Mammary epithelial cell (primary cell): ENCODE measurements at regions of chr22 and their contacts with region 1.

Region 1: DNA sequence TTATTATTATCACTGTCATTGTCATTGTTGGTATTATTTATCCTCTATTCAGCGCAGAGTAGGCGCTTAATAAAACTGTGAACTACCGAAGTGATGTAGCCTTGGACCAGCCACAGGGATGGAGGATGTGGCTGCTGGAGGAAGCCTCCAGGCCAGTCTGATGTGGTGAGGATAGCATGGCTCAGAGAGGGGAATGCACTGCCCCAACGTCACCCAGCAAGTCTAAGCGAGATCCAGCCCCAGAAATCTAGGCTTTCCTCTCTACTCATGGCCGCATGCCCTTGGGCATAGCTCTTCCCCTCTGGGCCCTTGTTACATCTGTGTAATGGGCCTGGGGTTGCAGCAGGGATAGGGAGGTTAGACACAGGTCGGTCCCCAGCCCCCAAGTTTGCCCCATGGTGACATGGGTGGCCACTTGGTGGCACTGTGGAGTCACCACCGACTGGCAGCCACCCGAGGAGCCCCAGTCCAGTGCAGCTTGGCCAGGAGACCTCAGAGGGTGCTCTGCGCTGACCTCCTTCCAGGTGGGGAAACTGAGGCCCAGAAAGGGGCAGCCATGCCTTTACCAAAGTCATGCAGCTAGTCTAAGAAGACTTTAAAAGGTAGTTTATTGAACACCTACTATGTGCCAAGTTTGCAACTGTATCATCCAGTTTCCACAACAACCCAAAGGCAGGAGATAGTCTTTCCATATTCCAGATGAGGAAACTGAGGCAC is 395.7 kb downstream of the MN1 start:
- DNase-seq: peak; percentile 45
- H3K4me3 ChIP-seq: no peak overlapping the region
- H3K27ac ChIP-seq: no peak overlapping the region
- H3K4me1 ChIP-seq: peaks cover 8% of the 10 kb centered on the region
- H3K27me3 ChIP-seq: no peaks in the 10 kb centered on the region
- CTCF ChIP-seq: peak; percentile 61 to 87

Region 2: DNA sequence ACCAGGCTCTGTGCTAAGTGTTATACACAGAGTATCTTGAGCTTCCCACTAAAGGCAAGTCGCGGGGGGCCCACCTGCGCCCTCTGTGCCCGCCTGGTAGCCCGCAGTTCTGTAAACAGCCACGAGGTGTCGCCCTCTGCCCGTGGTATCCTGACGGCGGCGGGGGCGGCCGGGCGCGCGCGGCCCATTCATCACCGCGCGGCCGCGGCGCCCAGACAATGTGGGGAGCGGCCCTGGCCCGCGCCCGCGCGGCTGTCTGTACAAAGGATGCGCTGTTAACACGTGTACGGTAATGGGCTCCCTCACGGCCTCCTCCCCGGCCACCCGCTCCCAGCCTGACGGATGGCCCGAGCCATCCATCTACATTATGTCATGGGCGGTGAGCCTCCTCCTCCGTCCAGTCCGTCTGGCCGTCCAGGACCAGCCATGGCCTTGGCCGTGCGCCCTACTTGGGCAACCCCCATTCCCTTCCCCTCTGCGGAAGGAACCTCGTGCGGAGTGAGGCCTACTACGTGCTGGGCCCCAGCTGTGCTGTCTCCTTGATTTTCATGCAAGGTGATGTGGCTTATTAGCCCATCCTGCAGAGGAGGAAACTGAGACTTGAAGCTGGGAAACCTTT is 649.0 kb before region 1 on chr22:
- CTCF ChIA-PET with region 1: no interaction called
- dilution Hi-C with region 1: no loop called
- in situ Hi-C with region 1: no loop called
- intact Hi-C with region 1: loop called (anchors 5 kb)
- DNase-seq: peak; percentile 36
- H3K4me3 ChIP-seq: peak overlapping the region in 1 of 3 experiments; percentile 36
- H3K27ac ChIP-seq: no peak overlapping the region
- H3K4me1 ChIP-seq: peaks cover 3% of the 10 kb centered on the region
- H3K27me3 ChIP-seq: no peaks in the 10 kb centered on the region
- CTCF ChIP-seq: peak; percentile 48 to 72

Region 3: DNA sequence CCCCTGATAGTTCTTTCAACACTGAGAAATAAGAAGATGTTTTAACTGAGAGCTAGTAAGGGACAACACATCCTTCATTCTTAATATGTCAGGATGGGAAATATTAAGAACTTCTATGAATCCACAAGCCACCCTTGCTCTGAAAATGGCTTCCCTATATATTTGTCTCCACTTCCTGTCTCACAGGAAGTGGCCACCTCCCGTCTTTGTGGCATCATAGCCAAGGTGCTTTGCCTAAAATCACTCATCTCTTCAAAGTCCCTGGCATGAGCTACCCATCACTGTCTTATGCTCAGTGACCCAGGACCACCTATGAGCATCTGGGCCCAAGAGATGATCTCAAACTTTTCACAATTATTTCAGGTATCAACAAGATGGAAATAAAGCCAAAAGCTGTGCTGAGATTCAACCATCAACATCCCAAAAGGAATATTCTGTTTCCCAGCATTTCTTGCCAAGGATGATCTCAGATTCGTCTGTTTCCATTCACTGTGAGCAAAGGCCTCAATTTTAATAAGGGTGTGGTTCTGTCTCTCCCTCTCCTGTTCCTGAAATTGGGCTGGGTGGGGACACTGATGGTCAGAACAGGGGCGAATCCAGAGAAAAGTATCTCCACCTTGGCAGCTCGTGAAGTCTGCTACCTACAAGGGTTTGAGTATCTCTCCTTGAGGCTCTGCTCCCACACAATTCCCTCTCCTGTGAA is 98.1 kb before region 1 on chr22:
- CTCF ChIA-PET with region 1: no interaction called
- dilution Hi-C with region 1: loop called (anchors 5 kb)
- in situ Hi-C with region 1: no loop called
- intact Hi-C with region 1: no loop called
- DNase-seq: no peak
- H3K4me3 ChIP-seq: no peak overlapping the region
- H3K27ac ChIP-seq: no peak overlapping the region
- H3K4me1 ChIP-seq: no peaks in the 10 kb centered on the region
- H3K27me3 ChIP-seq: no peaks in the 10 kb centered on the region
- CTCF ChIP-seq: no peak

Region 4: DNA sequence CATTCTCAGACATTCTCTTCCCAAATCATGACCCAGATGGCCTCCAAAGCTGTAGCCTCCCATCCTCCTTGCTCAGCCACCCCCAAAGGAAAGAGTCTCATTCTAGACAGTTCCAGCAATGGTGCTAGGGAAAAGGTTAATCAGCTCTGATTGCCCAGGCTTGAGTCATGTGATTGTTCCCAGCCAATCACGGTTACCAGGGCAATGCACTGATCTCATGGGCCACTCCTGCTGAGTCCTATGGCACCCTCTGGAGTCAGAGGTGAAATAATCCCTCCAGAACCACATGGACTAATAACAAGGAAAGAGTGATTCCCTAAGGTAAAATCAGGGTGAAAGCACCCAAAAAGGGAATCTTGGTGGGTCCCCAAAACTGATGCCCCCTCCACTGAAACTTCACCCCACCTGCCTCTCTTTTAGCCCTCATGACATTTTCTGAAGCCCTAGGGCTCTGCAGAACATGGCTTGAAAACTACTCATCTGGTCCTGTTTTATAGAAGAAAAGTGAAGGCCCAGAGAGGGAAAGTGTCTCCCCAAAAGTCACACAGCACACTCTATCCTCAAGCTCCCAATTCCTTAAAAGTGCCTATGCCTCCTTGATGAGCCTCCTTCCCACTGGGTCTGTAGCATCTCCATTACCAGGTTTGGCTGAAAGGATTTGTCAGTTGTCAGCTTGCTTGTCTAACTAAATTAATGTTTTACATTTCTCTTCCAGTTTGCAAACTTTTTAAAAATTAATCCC is 192.0 kb after region 1 on chr22:
- CTCF ChIA-PET with region 1: interaction called, 10 read pairs
- dilution Hi-C with region 1: no loop called
- in situ Hi-C with region 1: no loop called
- intact Hi-C with region 1: no loop called
- DNase-seq: peak; percentile 28
- H3K4me3 ChIP-seq: no peak overlapping the region
- H3K27ac ChIP-seq: no peak overlapping the region
- H3K4me1 ChIP-seq: no peaks in the 10 kb centered on the region
- H3K27me3 ChIP-seq: no peaks in the 10 kb centered on the region
- CTCF ChIP-seq: peak; percentile 3 to 28

Region 5: GRCh38 chr22:27718186-27719032 is 312.6 kb after region 1 on chr22:
- CTCF ChIA-PET with region 1: no interaction called
- dilution Hi-C with region 1: no loop called
- in situ Hi-C with region 1: no loop called
- intact Hi-C with region 1: loop called (anchors 2 kb)
- DNase-seq: peak; percentile 96
- H3K4me3 ChIP-seq: no peak overlapping the region
- H3K27ac ChIP-seq: peak overlapping the region; percentile 84
- H3K4me1 ChIP-seq: peaks cover 36% of the 10 kb centered on the region
- H3K27me3 ChIP-seq: no peaks in the 10 kb centered on the region
- CTCF ChIP-seq: no peak

Region 6: GRCh38 chr22:27880778-27881394 is 475.1 kb after region 1 on chr22:
- CTCF ChIA-PET with region 1: no interaction called
- dilution Hi-C with region 1: no loop called
- in situ Hi-C with region 1: no loop called
- intact Hi-C with region 1: loop called (anchors 10 kb)
- DNase-seq: peak; percentile 54
- H3K4me3 ChIP-seq: no peak overlapping the region
- H3K27ac ChIP-seq: no peak overlapping the region
- H3K4me1 ChIP-seq: peaks cover 24% of the 10 kb centered on the region
- H3K27me3 ChIP-seq: no peaks in the 10 kb centered on the region
- CTCF ChIP-seq: peak; percentile 68 to 73